Activated T-helper 2 cell treated with anti-CD3 and anti-CD28 coated beads, Interferon-gamma antibody, Interleukin-2, Interleukin-4, amounts not matched to agents 10 μg/mL and 5 μg/mL and 100 μg/mL, durations not matched to agents 14 hours and 24 hours and 36 hours (primary cell): ENCODE measurements at regions of chrX and their contacts with region 1.

Region 1: DNA sequence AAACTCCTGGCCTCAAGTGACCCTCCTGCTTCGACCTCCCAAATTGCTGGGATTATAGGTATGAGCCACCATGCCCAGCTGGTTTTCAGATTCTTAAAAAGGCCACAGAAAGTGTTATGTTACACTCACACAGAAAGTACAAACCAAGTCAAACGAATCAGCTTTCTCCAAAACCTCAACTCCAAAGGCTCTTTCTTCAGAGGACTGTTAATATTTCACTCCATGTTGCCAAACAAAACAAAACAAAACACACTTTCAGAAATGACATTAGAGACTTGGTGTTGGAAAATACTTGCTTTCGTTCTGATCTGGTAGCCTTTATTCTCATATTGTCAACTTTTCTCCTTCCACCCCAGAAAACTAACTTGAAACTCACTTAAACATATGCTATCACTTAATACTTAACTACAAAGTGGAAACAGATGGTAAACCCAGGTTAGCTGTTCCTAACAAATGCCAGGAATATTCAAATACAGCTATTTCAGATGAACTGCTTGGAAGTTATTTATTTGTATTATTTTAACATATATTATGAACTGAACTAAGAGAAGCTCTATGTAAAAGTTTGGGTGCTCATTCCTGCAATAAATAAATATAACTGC is 34.7 kb downstream of the RLIM start:
- DNase-seq: no peak
- H3K4me3 Mint-ChIP-seq: no peak overlapping the region
- H3K27ac Mint-ChIP-seq: peak overlapping the region; percentile 75
- H3K4me1 Mint-ChIP-seq: peaks cover 11% of the 10 kb centered on the region
- H3K27me3 Mint-ChIP-seq: no peaks in the 10 kb centered on the region

Region 2: GRCh38 chrX:74251006-74251930 is 328.4 kb before region 1 on chrX:
- intact Hi-C with region 1: no loop called
- DNase-seq: no peak
- H3K4me3 Mint-ChIP-seq: no peak overlapping the region
- H3K27ac Mint-ChIP-seq: no peak overlapping the region
- H3K4me1 Mint-ChIP-seq: no peaks in the 10 kb centered on the region
- H3K27me3 Mint-ChIP-seq: no peaks in the 10 kb centered on the region

Region 3: GRCh38 chrX:75746891-75747639 is 1167.4 kb after region 1 on chrX:
- intact Hi-C with region 1: loop called (anchors 5 kb)
- DNase-seq: peak; percentile 8
- H3K4me3 Mint-ChIP-seq: peak overlapping the region; percentile 65
- H3K27ac Mint-ChIP-seq: no peak overlapping the region
- H3K4me1 Mint-ChIP-seq: peaks cover 1% of the 10 kb centered on the region
- H3K27me3 Mint-ChIP-seq: no peaks in the 10 kb centered on the region